ENCODE measurements at regions of chr9 and their contacts with region 1.

Region 1: DNA sequence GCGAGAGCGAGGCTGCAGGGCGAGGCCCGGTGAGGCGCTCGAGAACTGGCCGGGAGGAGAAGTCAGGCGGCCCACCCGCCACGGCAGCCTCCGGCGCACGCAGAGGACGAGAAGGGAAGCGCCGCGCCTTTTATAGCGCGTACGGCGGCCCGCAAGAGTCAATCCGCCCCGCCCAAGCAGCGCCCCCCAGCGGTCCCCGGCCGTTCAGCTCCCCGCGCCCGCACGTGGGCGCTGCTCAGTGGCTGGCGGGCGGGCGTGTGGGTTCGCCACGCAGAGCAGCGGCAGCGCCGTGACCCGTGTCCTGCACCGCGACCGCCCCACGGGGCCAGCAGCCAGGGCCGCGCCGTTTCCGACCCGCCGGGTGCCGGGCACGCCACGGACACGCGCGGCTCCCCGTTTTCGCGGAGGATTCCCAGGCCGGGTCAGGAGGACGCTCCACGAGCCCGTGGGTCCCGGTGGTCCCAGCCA is 14.6 kb downstream of the LCN10 start:
- DNase-seq: peak; percentile 88
- H3K4me3 Mint-ChIP-seq: peak overlapping the region; percentile 97
- H3K27ac Mint-ChIP-seq: no peak overlapping the region
- H3K4me1 Mint-ChIP-seq: peaks cover 21% of the 10 kb centered on the region
- H3K27me3 Mint-ChIP-seq: no peaks in the 10 kb centered on the region

Region 2: DNA sequence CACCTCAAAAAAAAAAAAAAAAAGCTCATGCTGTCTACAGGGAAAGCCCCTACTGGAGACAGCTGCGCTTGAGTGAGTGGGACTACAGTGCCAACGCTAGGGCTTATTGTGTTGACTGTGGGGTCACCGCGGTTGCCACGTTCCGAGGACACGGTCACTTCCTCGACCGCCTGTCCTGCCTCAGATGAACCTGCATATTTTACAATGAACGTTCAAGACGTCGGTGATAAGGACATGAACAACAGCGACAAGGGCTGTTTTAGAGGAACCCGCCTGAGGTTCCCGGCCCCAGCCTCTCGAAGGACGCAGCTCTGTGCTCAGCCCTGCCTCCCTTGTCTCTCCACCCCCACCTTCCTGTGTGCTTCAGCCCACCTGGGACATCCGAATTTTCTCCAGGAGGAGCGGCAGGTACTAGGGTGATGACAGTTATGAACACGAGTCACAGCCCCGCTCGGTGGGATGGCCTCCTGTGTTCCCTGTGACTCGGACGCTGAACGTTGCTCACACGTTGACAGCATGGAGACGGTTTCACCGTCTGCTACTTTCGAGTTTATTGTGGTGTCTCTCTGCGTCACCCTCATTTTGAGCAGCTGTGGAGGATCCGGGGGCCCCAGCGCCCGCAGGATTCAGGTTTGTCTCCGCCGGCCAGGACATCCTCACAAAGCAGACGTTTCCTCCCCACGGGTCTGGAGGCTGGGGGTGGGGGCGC is 27.0 kb before region 1 on chr9:
- intact Hi-C with region 1: loop called (anchors 1 kb)
- DNase-seq: peak; percentile 61
- H3K4me3 Mint-ChIP-seq: peak overlapping the region; percentile 84
- H3K27ac Mint-ChIP-seq: peak overlapping the region; percentile 97
- H3K4me1 Mint-ChIP-seq: peaks cover 14% of the 10 kb centered on the region
- H3K27me3 Mint-ChIP-seq: peaks cover 10% of the 10 kb centered on the region

Measured in activated T-helper 2 cell treated with anti-CD3 and anti-CD28 coated beads, Interferon-gamma antibody, Interleukin-2, Interleukin-4, amounts not matched to agents 10 μg/mL and 5 μg/mL and 100 μg/mL, durations not matched to agents 14 hours and 24 hours and 36 hours (primary cell).